ENCODE measurements at regions of chr5 and their contacts with region 1.

Region 1: GRCh38 chr5:133944263-133945185 is 23.9 kb downstream of the C5orf15 start:
- DNase-seq: peak; percentile 70
- H3K4me3 Mint-ChIP-seq: no peak overlapping the region
- H3K27ac Mint-ChIP-seq: no peak overlapping the region
- H3K4me1 Mint-ChIP-seq: peaks cover 3% of the 10 kb centered on the region
- H3K27me3 Mint-ChIP-seq: no peaks in the 10 kb centered on the region

Region 2: GRCh38 chr5:133111299-133111698 is 833.2 kb before region 1 on chr5:
- CTCF ChIA-PET with region 1: interaction called, 16 read pairs
- POLR2A ChIA-PET with region 1: no interaction called
- intact Hi-C with region 1: no loop called
- DNase-seq: peak; percentile 87
- H3K4me3 Mint-ChIP-seq: no peak overlapping the region
- H3K27ac Mint-ChIP-seq: no peak overlapping the region
- H3K4me1 Mint-ChIP-seq: peaks cover 33% of the 10 kb centered on the region
- H3K27me3 Mint-ChIP-seq: no peaks in the 10 kb centered on the region

Region 3: DNA sequence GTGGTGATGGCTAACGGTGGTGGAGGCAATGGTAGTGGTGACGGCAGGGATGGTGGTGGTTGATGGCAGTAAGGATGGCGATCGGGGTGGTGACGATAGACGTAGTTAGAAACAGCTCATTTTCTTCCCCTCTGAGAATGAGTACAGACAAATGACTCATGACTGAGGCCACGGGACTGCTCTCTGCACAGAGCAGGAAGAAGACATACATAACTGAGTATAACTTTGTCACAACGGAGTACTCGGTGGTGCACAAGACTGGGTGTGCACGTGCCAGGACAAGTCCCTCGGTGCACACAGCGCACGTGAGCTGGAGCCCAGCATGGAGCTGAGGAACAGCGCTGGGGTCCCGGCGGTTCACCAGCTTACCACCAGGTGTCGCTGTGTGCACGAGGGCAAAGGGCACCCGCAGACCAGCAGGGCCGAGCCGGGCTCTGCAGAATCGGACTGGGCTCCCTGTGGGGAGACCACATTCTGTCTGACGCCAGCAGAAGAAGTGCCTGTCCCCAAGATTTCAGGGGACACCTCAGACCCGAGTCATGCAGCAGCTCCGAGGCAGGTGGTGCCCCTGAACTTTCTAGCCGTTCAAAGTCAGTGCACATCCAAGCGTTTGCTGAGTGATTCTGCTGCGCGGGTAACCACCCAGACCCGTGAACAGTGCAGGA is 520.8 kb before region 1 on chr5:
- CTCF ChIA-PET with region 1: interaction called, 16 read pairs
- POLR2A ChIA-PET with region 1: no interaction called
- intact Hi-C with region 1: no loop called
- DNase-seq: peak; percentile 76
- H3K4me3 Mint-ChIP-seq: no peak overlapping the region
- H3K27ac Mint-ChIP-seq: no peak overlapping the region
- H3K4me1 Mint-ChIP-seq: peaks cover 10% of the 10 kb centered on the region
- H3K27me3 Mint-ChIP-seq: peaks cover 11% of the 10 kb centered on the region

Region 4: GRCh38 chr5:133489632-133490031 is 454.9 kb before region 1 on chr5:
- CTCF ChIA-PET with region 1: interaction called, 3 read pairs
- POLR2A ChIA-PET with region 1: no interaction called
- intact Hi-C with region 1: loop called (anchors 5 kb)
- DNase-seq: peak; percentile 49
- H3K4me3 Mint-ChIP-seq: no peak overlapping the region
- H3K27ac Mint-ChIP-seq: no peak overlapping the region
- H3K4me1 Mint-ChIP-seq: peaks cover 5% of the 10 kb centered on the region
- H3K27me3 Mint-ChIP-seq: no peaks in the 10 kb centered on the region

Region 5: GRCh38 chr5:133552931-133553525 is 391.5 kb before region 1 on chr5:
- CTCF ChIA-PET with region 1: interaction called, 7 read pairs
- POLR2A ChIA-PET with region 1: no interaction called
- intact Hi-C with region 1: loop called (anchors 1 kb)
- DNase-seq: peak; percentile 71
- H3K4me3 Mint-ChIP-seq: no peak overlapping the region
- H3K27ac Mint-ChIP-seq: no peak overlapping the region
- H3K4me1 Mint-ChIP-seq: no peaks in the 10 kb centered on the region
- H3K27me3 Mint-ChIP-seq: peaks cover 19% of the 10 kb centered on the region

Region 6: DNA sequence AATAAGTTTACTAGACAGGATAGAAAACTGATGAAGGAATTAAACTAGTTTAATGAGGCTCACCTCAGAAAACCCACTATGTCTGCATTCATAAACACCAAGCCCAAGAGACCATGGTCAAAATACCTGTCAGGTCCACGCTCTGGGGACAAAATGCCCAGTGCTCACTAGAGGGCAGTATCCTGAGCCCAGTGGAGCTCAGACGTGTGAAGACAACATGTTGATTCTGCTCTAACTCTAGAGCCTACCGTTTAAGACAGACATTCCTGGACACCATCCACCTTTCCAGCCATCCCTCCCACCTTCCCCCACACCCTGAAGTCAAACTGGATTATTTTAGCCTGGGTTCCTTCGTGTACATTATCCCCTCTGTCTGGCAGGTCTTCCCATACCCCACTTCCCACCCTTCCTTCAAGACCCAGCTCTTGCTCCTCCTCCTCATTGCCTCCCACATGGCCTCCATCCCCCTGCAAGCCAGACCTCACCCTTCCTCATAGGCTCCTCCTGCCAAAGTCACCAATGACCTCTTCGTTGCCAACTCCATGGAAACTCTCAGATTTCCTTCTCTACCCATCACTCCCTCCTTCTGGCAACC is 189.9 kb before region 1 on chr5:
- CTCF ChIA-PET with region 1: interaction called, 7 read pairs
- POLR2A ChIA-PET with region 1: no interaction called
- intact Hi-C with region 1: loop called (anchors 1 kb)
- DNase-seq: peak; percentile 52
- H3K4me3 Mint-ChIP-seq: no peak overlapping the region
- H3K27ac Mint-ChIP-seq: no peak overlapping the region
- H3K4me1 Mint-ChIP-seq: no peaks in the 10 kb centered on the region
- H3K27me3 Mint-ChIP-seq: peaks cover 15% of the 10 kb centered on the region

Region 7: GRCh38 chr5:133907075-133907474 is 37.4 kb before region 1 on chr5:
- CTCF ChIA-PET with region 1: no interaction called
- POLR2A ChIA-PET with region 1: no interaction called
- intact Hi-C with region 1: loop called (anchors 5 kb)
- DNase-seq: no peak
- H3K4me3 Mint-ChIP-seq: no peak overlapping the region
- H3K27ac Mint-ChIP-seq: no peak overlapping the region
- H3K4me1 Mint-ChIP-seq: no peaks in the 10 kb centered on the region
- H3K27me3 Mint-ChIP-seq: no peaks in the 10 kb centered on the region

Region 8: GRCh38 chr5:133996683-133997252 is 52.2 kb after region 1 on chr5:
- CTCF ChIA-PET with region 1: no interaction called
- POLR2A ChIA-PET with region 1: no interaction called
- intact Hi-C with region 1: no loop called
- DNase-seq: peak; percentile 22
- H3K4me3 Mint-ChIP-seq: no peak overlapping the region
- H3K27ac Mint-ChIP-seq: no peak overlapping the region
- H3K4me1 Mint-ChIP-seq: peaks cover 55% of the 10 kb centered on the region
- H3K27me3 Mint-ChIP-seq: no peaks in the 10 kb centered on the region

Region 9: DNA sequence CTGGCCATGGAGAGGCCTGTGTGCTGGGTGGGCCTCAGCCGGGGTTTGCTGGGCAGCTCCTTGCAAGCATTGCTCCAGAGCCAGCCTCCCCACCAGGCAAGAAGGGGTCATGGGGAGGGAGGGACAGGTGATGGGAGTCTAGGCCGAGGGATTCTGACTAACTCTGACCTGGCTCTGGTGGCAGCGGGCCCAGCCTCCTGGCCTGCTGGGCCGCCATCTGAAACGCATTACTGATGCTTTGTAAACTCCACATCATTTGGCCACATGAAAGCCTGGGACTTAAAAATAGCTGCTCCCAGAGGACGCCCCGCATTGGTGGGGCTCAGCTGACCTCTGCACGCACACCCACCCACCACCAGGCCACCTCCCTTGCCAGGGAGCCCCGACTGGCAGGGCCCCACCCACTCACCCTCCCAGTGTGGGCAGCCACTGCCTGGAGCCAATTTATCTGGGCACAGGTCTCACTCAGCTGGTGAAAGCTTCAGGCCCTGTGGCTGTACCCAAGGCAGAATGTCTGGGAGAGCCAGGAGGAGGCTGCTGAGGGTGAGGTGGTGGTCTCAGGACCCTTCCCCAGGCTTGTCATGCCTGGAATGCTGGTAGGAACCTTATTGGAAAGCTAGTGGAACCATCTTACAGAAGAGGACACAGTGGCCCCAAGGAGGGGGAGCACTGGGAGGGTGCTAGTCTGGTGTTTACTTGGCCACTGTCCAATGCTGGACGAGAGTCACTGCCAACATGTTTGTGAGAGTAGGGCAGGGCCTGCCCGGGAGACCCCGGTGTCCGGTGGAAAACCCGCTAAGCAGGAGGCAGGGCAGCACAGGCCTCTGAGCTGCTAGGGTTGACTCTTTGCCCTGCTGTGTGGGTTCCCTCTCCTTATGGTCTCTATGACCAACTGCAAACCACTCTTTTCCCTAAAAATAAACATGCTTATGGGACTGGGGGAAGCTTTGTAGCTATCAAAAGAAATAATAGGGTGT is 180.8 kb after region 1 on chr5:
- CTCF ChIA-PET with region 1: no interaction called
- POLR2A ChIA-PET with region 1: no interaction called
- intact Hi-C with region 1: no loop called
- DNase-seq: peak; percentile 49
- H3K4me3 Mint-ChIP-seq: peak overlapping the region; percentile 69
- H3K27ac Mint-ChIP-seq: peak overlapping the region; percentile 90
- H3K4me1 Mint-ChIP-seq: peaks cover 99% of the 10 kb centered on the region
- H3K27me3 Mint-ChIP-seq: no peaks in the 10 kb centered on the region

Measured in activated CD4-positive, alpha-beta memory T cell treated with anti-CD3 and anti-CD28 coated beads for 36 hours (primary cell).